Prostate gland (tissue), 2 donors: ENCODE measurements at regions of chr20 and their contacts with region 1.

Region 1: DNA sequence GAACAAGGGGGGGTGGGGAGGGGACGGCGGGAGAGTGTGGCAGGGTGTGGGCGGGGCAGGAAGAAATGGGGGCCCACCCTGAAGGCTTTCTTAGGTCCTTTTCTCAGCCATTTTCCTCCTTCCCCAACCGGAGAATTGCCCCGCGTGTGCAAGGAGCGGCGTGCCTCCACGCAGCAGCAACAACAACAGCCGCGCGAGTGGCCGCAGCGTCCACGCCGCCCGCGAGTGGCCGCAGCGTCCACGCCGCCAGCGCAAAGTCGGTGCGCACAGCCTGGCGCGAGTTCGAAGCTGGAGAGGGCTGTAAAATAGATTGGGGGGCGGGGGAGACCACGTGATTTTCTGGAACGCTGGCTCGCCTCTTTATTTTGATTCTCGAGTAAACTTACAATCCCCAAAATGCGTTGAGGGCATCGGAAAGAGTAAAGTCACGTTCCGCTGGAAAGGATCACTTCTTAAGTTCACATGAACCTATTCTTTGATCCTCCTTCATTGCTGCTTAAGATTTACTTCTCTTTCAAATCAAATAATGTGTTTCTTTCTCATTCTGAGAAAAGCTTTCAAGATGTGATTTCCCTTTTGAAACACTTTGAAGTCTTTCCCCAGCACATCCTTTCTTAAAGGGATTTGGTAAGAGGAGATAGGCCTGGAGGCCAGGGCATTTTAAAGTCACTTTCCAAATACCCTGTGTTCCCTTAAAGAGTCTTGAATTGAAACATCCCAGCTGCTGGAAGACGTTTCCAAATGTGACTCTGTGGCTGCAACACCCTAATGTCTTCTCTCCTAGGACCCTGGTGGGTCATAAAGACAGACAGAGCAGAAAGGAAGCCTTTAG is 66.7 kb upstream of the ZNF217 start:
- DNase-seq: no peak
- H3K4me3 ChIP-seq: peak overlapping the region; percentile 21 to 22
- H3K27ac ChIP-seq: peak overlapping the region; percentile 52 to 54
- H3K4me1 ChIP-seq: peaks cover 4% of the 10 kb centered on the region
- H3K27me3 ChIP-seq: no peaks in the 10 kb centered on the region
- CTCF ChIP-seq: no peak
- POLR2A ChIP-seq: no peak

Region 2: GRCh38 chr20:53594068-53595017 is 66.0 kb before region 1 on chr20:
- intact Hi-C with region 1: loop called (anchors 2 kb)
- DNase-seq: peak; percentile 96
- H3K4me3 ChIP-seq: peak overlapping the region; percentile 89 to 92
- H3K27ac ChIP-seq: peak overlapping the region; percentile 98 to 99
- H3K4me1 ChIP-seq: no peaks in the 10 kb centered on the region
- H3K27me3 ChIP-seq: no peaks in the 10 kb centered on the region
- CTCF ChIP-seq: peak in 3 of 4 experiments; percentile 9 to 38 (median 33)
- POLR2A ChIP-seq: peak; percentile 88

Region 3: GRCh38 chr20:53623454-53624211 is 36.7 kb before region 1 on chr20:
- intact Hi-C with region 1: loop called (anchors 5 kb)
- DNase-seq: peak; percentile 69
- H3K4me3 ChIP-seq: peak overlapping the region; percentile 18 to 19
- H3K27ac ChIP-seq: peak overlapping the region; percentile 89 to 90
- H3K4me1 ChIP-seq: peaks cover 13% of the 10 kb centered on the region
- H3K27me3 ChIP-seq: no peaks in the 10 kb centered on the region
- CTCF ChIP-seq: no peak
- POLR2A ChIP-seq: no peak

Region 4: GRCh38 chr20:53738039-53738944 is 78.0 kb after region 1 on chr20:
- intact Hi-C with region 1: no loop called
- DNase-seq: peak; percentile 94
- H3K4me3 ChIP-seq: peak overlapping the region in 1 of 2 donors; percentile 16
- H3K27ac ChIP-seq: peak overlapping the region; percentile 82 to 86
- H3K4me1 ChIP-seq: no peaks in the 10 kb centered on the region
- H3K27me3 ChIP-seq: no peaks in the 10 kb centered on the region
- CTCF ChIP-seq: no peak
- POLR2A ChIP-seq: peak; percentile 76

Region 5: DNA sequence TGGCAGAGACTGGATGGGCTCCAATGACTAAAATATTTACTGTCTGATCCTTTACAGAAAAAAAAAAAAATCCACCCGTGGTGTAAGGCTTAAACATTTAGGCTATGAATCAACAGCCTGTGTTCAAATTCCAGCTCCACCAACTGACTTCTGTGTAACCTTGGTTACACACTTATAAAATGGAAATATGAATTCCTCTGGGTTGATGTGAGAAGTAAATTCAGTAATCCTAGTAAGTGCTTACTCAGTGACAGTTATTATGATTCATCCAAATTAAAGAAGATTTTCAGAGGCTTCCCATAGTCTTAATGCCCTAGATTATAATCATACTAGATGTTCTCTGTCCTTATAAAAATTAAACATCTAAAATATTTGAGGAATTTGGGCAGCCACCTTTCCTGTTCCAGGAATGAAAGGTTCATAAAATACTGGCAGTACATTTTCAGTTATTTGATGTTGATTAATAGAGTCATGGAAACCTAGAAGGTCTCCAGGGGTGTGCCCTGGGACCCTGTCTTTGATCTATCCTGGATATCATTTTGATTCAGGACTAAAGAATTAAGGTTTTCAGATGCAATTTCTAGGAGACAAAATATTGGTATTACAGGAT is 113.6 kb after region 1 on chr20:
- intact Hi-C with region 1: no loop called
- DNase-seq: no peak
- H3K4me3 ChIP-seq: no peak overlapping the region
- H3K27ac ChIP-seq: peak overlapping the region; percentile 2 to 15
- H3K4me1 ChIP-seq: no peaks in the 10 kb centered on the region
- H3K27me3 ChIP-seq: no peaks in the 10 kb centered on the region
- CTCF ChIP-seq: no peak
- POLR2A ChIP-seq: no peak